PC-3 (cell line): ENCODE measurements at regions of chr2 and their contacts with region 1.

Region 1: GRCh38 chr2:99180755-99181623 is at the starts of genes MITD1 and MRPL30:
- DNase-seq: peak; percentile 97
- ATAC-seq: peak; percentile 88
- H3K4me3 ChIP-seq: peak within 1 kb of the TSS; percentile 99
- H3K27ac ChIP-seq: peak within 1 kb of the TSS; percentile 27
- H3K4me1 ChIP-seq: peaks cover 11% of the 10 kb centered on the region
- H3K27me3 ChIP-seq: no peaks in the 10 kb centered on the region
- CTCF ChIP-seq: no peak
- total RNA-seq, gene MITD1: 16.7 and 19.6 TPM in 2 replicates
- total RNA-seq, gene MRPL30: 39.7 and 42.8 TPM in 2 replicates

Region 2: DNA sequence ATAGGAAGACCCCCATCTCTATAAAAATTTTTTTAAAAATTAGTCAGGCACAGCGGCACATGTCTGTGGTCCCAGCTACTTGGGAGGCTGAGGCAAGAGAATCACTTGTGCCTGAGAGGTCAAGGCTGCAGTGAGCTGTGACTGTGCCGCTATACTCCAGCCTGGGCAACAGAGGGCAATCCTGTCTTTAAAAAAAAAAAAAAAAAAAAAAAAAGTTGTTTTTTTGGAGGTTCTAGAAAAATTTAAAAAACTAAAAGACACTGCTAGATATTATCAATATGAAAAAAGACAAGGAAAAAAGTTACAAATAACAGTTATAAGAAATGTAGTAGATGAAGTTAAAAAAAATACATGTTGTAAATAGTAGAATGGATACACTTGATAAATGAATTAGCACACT is 95.6 kb before region 1 on chr2:
- CTCF ChIA-PET with region 1: no interaction called
- POLR2A ChIA-PET with region 1: no interaction called
- intact Hi-C with region 1: loop called (anchors 5 kb)
- DNase-seq: peak; percentile 24
- ATAC-seq: peak; percentile 50; the same call in 1 of the 2 replicates
- H3K4me3 ChIP-seq: no peak overlapping the region
- H3K27ac ChIP-seq: no peak overlapping the region
- H3K4me1 ChIP-seq: no peaks in the 10 kb centered on the region
- H3K27me3 ChIP-seq: no peaks in the 10 kb centered on the region
- CTCF ChIP-seq: peak; percentile 56

Region 3: DNA sequence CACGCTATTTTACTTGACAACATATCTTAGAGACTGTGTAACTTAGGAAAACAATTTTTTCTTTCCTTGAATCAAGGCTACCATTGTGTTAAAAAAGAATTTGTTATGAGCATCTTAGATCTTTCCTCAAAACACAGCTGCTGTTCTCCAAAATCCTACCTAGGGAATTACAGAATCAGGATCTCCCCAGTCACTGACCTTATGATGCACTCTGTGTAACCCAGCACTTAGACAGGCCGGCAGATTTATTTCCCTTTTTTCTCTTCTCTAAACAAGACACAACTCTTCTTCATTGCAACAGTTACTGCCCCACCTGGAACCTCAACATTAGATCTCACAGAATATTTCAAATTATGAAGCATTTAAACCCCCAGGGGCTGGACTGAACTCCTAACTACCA is 53.0 kb before region 1 on chr2:
- CTCF ChIA-PET with region 1: no interaction called
- POLR2A ChIA-PET with region 1: no interaction called
- intact Hi-C with region 1: no loop called
- DNase-seq: no peak
- ATAC-seq: no peak
- H3K4me3 ChIP-seq: no peak overlapping the region
- H3K27ac ChIP-seq: no peak overlapping the region
- H3K4me1 ChIP-seq: no peaks in the 10 kb centered on the region
- H3K27me3 ChIP-seq: no peaks in the 10 kb centered on the region
- CTCF ChIP-seq: no peak

Region 4: GRCh38 chr2:99141110-99142108 is 39.6 kb before region 1 on chr2 and contains the start of gene C2orf15:
- CTCF ChIA-PET with region 1: interaction called, 3 read pairs
- POLR2A ChIA-PET with region 1: interaction called, 3 read pairs
- intact Hi-C with region 1: loop called (anchors 1 kb)
- DNase-seq: peak; percentile 93
- ATAC-seq: peak; percentile 87
- H3K4me3 ChIP-seq: peak within 1 kb of the TSS; percentile 88
- H3K27ac ChIP-seq: peak within 1 kb of the TSS; percentile 48
- H3K4me1 ChIP-seq: peaks cover 20% of the 10 kb centered on the region
- H3K27me3 ChIP-seq: no peaks in the 10 kb centered on the region
- CTCF ChIP-seq: no peak
- total RNA-seq, gene C2orf15: 3.3 and 4.4 TPM in 2 replicates

Region 5: GRCh38 chr2:99154643-99155536 is 26.1 kb before region 1 on chr2 and contains the starts of genes LIPT1 and TSGA10:
- CTCF ChIA-PET with region 1: no interaction called
- POLR2A ChIA-PET with region 1: no interaction called
- intact Hi-C with region 1: loop called (anchors 2 kb)
- DNase-seq: peak; percentile 89
- ATAC-seq: peak; percentile 90
- H3K4me3 ChIP-seq: peak within 1 kb of the TSS; percentile 92
- H3K27ac ChIP-seq: peak within 1 kb of the TSS; percentile 75
- H3K4me1 ChIP-seq: peaks cover 30% of the 10 kb centered on the region
- H3K27me3 ChIP-seq: no peaks in the 10 kb centered on the region
- CTCF ChIP-seq: peak; percentile 43; the same call in 1 of the 2 replicates
- total RNA-seq, gene LIPT1: 6.7 and 8.7 TPM in 2 replicates
- total RNA-seq, gene TSGA10: 3.6 and 8.9 TPM in 2 replicates

Region 6: DNA sequence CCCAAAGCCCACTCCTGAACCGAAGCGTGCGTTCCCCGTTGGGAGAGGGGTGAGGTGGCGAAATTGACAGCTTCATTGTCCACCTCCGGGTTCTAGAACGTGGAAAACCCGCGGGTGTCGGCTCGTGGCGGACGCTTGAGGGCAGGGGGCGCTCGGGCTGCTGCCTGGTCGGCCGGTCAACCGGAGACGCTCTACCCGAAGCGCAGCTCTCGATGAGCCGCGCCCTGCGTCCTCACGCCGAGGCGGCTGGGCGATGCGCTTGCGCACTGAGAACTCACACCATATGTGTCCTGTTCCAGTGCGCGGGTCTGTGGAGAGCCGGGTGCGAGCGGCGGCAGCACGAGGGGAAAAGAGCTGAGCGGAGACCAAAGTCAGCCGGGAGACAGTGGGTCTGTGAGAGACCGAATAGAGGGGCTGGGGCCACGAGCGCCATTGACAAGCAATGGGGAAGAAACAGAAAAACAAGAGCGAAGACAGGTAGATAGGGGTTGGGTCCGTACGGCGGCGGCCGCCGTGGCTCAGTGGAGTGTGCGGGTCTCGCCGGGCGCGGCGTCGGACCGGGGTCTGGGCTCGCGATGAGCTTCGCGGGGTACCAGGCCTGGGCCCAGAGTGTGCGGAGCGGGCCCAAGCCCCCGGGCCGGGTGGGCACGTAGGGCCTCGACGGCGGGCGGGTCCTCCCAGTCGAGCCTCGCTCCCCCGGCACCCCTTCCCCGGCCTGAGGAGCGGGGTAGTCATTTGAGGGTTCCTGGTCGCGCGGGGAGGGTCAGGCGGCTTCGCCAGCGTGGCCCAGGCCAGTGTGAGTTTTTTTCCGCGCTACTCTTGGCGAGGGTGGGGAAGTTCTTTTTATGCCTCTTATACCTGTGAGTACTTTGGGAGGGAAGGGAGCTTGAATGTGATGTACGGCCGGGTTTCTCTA is 156.4 kb after region 1 on chr2 and contains the start of gene EIF5B:
- CTCF ChIA-PET with region 1: no interaction called
- POLR2A ChIA-PET with region 1: interaction called, 21 read pairs
- intact Hi-C with region 1: loop called (anchors 1 kb)
- DNase-seq: peak; percentile 98
- ATAC-seq: peak; percentile 78
- H3K4me3 ChIP-seq: peak within 1 kb of the TSS; percentile 81
- H3K27ac ChIP-seq: peak within 1 kb of the TSS; percentile 73
- H3K4me1 ChIP-seq: peaks cover 34% of the 10 kb centered on the region
- H3K27me3 ChIP-seq: no peaks in the 10 kb centered on the region
- CTCF ChIP-seq: peak; percentile 83
- total RNA-seq, gene EIF5B: 35.7 and 35.9 TPM in 2 replicates